Posterior vena cava (tissue), 2 donors: ENCODE measurements at regions of chr19 and their contacts with region 1.

Region 1: DNA sequence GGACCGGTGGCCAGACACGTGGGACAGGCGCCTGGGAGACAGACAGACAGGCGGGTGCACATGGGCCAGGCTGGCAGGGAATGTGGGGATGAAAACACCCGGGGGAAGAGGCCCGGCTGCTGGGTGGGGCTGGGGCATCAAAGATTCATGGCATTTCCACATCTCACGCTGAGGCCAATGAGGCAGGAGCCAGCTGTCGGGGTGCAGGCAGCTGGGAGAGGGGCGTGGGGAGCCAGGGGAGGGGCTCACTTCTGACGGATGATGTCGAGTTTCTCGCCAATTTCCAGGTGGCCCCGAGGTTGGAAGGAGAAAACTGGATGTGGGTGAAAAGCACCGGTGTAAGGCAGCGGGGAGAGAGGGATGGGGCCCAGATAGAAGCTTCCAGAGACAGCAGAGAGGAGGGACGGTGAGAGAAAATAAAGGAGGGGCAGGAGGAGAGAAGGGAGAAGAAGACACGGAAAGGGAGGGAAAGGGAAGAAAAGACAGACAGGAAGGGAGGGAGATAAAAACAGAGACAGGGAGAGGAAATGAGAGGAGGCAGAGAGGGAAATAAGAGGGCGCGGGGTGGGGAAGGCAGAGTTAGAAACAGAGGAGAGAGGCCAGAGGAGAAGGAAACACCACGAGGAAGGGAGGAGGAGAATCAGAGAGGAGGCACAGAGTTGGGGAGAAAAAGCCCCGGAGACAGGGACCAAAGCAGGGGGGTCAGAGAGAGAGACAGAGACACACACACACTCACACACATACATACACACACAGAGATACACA is 8.0 kb upstream of the CCER2 start:
- DNase-seq: peak; percentile 58

Region 2: DNA sequence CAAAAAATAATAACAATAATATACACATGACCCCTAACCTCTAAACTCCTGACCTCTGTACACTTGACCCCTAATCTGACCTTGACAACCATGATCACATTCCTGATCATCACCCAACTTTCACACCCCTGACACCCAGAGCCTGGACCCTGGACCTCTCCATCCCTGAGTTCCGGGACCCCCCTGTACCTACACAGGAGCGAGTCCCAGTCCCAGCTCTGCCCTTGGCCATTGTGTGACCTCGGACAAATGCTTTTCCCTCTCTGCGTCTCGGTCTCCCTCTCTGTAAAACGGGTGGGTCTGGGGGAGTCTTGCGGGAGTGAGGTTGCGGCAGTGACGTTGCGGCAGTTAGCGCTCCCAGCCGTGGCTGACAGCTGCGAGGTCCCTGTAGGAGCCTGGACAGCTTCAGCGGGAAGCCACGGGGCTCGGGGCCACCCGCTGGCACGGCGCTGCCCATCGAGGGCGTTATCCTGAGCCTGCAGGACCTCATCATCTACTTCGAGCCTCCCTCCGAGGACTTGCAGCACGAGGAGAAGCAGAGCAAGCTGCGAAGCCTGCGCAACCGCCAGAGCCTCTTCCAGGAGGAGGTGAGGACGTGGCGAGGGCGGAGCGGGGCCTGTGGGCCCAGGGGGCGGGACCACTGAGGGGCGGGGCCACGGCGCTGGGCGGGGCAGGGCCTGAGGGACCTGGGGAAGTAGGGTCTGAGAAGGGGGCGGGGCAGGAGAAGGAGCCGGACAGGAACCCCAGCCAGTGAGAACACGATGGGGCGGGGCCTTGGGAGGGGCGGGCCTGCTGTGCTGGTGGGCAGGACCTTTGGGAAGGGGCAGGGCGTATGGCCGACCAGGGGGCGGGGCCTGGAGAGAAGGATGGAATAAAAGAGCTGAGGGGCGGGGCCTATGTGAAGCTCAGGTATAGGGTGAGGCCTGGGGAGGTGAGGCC is 467.3 kb before region 1 on chr19:
- intact Hi-C with region 1: no loop called
- DNase-seq: no peak

Region 3: DNA sequence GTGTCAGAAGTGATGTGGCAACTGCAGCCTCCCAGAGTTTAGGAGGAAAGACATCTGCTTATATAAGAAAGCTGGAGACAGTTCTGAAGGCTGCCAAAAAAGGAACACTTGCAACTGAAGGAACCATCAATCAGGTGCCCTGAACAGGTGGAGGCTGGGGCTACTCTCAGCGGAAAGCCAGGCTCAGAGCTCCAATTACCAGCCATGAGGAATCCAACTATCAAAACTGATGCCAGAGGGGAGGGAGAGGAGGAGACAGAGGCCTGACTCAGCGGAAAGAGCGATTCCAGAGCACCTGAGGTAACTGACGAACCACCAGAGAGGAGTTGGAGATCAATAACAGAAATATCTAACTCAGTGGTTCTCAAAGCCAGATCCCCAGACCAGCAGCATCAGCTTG is 882.9 kb after region 1 on chr19:
- intact Hi-C with region 1: loop called in 1 of 2 experiments (anchors 5 kb)
- DNase-seq: no peak